ENCODE measurements at regions of chr11 and their contacts with region 1.

Region 1: GRCh38 chr11:102109896-102110760 is at the start of gene YAP1:
- DNase-seq: peak; percentile 89 to 93 (median 92)
- ATAC-seq: peak; percentile 75 to 94 (median 86)
- H3K4me3 ChIP-seq: peak within 1 kb of the TSS; percentile 66 to 98 (median 84)
- H3K27ac ChIP-seq: peak within 1 kb of the TSS; percentile 88 to 98 (median 96)
- H3K4me1 ChIP-seq: peaks cover 0 to 35% (median 21%) of the 10 kb centered on the region in 12 donors
- H3K27me3 ChIP-seq: peaks cover 0 to 50% (median 0%) of the 10 kb centered on the region in 9 donors
- CTCF ChIP-seq: peak in 1 of 12 donors; percentile 13
- POLR2A ChIP-seq: peak in 1 of 2 donors; percentile 57
- total RNA-seq, gene YAP1: 45.6 to 93.0 (median 80.6) TPM

Region 2: GRCh38 chr11:101894505-101894904 is 215.6 kb before region 1 on chr11:
- intact Hi-C with region 1: no loop called
- DNase-seq: no peak
- ATAC-seq: no peak
- H3K4me3 ChIP-seq: no peak overlapping the region
- H3K27ac ChIP-seq: no peak overlapping the region
- H3K4me1 ChIP-seq: no peaks in the 10 kb centered on the region
- H3K27me3 ChIP-seq: peaks cover 0 to 10% (median 0%) of the 10 kb centered on the region in 9 donors
- CTCF ChIP-seq: no peak
- POLR2A ChIP-seq: no peak

Region 3: GRCh38 chr11:102144357-102145342 is 34.5 kb after region 1 on chr11:
- intact Hi-C with region 1: loop called in 4 of 10 experiments (anchors 5 kb)
- DNase-seq: peak in 4 of 5 donors; percentile 45 to 70 (median 62)
- ATAC-seq: peak in 3 of 4 donors; percentile 70 to 81 (median 76)
- H3K4me3 ChIP-seq: no peak overlapping the region
- H3K27ac ChIP-seq: peak overlapping the region; percentile 18 to 69 (median 56)
- H3K4me1 ChIP-seq: peaks cover 0 to 71% (median 46%) of the 10 kb centered on the region in 12 donors
- H3K27me3 ChIP-seq: no peaks in the 10 kb centered on the region
- CTCF ChIP-seq: no peak
- POLR2A ChIP-seq: no peak

Region 4: GRCh38 chr11:102205805-102206204 is 95.7 kb after region 1 on chr11:
- intact Hi-C with region 1: loop called in 3 of 10 experiments (anchors 5 to 10 kb)
- DNase-seq: no peak
- ATAC-seq: no peak
- H3K4me3 ChIP-seq: no peak overlapping the region
- H3K27ac ChIP-seq: no peak overlapping the region
- H3K4me1 ChIP-seq: no peaks in the 10 kb centered on the region
- H3K27me3 ChIP-seq: no peaks in the 10 kb centered on the region
- CTCF ChIP-seq: no peak
- POLR2A ChIP-seq: no peak

Region 5: GRCh38 chr11:102225689-102226568 is 115.8 kb after region 1 on chr11:
- intact Hi-C with region 1: loop called in 3 of 10 experiments (anchors 5 kb)
- DNase-seq: no peak
- ATAC-seq: peak in 1 of 4 donors; percentile 18
- H3K4me3 ChIP-seq: no peak overlapping the region
- H3K27ac ChIP-seq: no peak overlapping the region
- H3K4me1 ChIP-seq: peaks cover 0 to 32% (median 10%) of the 10 kb centered on the region in 12 donors
- H3K27me3 ChIP-seq: no peaks in the 10 kb centered on the region
- CTCF ChIP-seq: no peak
- POLR2A ChIP-seq: no peak

Region 6: DNA sequence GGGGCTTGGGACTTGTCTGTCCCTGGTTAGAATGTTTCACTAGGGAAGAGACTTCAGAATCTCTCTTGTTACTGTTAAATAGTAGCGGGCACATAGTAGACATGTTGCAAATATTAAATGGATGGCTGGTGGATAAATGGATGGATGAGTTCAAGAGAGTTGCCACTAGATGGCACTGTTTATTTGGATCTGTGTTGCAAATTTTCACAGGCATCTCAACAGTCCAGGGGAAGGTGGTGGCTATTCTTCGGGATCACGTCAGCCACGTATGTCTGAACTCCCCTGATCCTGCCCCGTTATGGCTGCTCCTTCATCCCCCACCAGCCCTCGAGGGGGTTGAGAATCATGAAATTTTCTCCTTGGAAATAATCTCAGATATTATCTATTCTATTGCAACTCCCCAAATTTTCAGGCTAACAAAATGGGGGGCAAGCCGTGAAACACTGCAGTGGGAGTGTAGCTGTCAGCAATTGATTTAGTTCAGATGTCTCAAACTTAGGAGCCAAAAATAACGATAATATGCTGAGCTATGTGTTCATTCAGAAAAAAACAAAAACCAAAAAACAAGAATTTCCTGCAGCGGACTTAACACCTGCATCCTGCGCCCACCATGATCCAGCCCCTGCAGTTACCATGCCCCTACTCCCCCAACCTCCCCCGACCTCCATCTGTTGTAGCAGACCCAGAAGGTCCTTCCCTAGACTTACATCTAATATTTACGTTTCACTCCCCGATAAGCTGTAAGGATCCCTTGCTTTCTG is 178.0 kb after region 1 on chr11:
- intact Hi-C with region 1: loop called in 1 of 10 experiments (anchors 10 kb)
- DNase-seq: peak in 3 of 5 donors; percentile 23 to 31 (median 28)
- ATAC-seq: peak; percentile 78 to 92 (median 82)
- H3K4me3 ChIP-seq: peak overlapping the region in 8 of 12 donors; percentile 10 to 42 (median 28)
- H3K27ac ChIP-seq: no peak overlapping the region
- H3K4me1 ChIP-seq: peaks cover 0 to 23% (median 0%) of the 10 kb centered on the region in 12 donors
- H3K27me3 ChIP-seq: no peaks in the 10 kb centered on the region
- CTCF ChIP-seq: peak; percentile 66 to 84 (median 76)
- POLR2A ChIP-seq: no peak

Measured in heart left ventricle (tissue), 16 donors.